ENCODE measurements at regions of chr20 and their contacts with region 1.

Region 1: DNA sequence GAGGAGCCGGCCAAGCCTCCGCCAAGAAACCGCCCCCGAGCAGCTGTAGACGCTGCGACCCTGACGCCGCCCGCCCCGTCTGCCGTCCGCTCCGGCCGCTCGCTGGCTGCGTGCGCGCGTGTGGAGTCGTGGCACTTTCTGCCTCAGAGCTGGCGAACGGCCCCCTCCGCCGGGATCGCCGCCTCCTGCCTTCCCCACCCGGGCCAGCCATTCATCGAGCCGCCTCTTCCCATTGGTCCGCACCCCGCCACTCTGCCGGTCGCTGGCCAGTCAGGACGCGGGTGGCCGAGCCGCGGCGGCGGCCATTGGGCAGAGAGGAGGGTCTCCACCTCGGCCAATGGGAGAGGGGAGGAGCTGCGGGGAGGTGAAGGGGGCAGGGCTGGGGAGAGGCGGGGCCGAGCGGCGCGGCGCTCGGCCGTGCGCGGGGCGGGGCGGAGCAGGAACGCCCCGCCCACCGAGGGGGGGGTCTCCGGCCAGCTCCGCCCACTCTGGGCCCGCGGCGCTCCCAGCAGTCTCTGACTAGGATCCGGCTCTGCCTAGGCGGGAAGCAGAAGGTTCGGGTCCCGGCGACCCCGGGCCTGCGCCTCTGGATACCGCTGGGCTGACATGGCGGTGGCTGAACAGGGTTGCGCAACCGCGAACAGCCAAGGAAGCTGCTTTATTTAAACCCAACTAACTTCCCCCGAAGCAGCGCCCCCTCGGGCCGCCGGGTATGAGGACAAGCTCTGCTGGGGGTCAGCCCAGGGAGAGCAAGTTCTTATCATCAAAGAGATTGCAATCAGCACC is at the start of gene RRBP1:
- DNase-seq: peak; percentile 98
- ATAC-seq: peak; percentile 97
- H3K4me3 Mint-ChIP-seq: peak within 1 kb of the TSS; percentile 77
- H3K27ac Mint-ChIP-seq: peak within 1 kb of the TSS; percentile 88
- H3K4me1 Mint-ChIP-seq: peaks cover 32% of the 10 kb centered on the region
- H3K27me3 Mint-ChIP-seq: peaks cover 29% of the 10 kb centered on the region
- total RNA-seq, gene RRBP1: 64.3 to 66.7 TPM

Region 2: DNA sequence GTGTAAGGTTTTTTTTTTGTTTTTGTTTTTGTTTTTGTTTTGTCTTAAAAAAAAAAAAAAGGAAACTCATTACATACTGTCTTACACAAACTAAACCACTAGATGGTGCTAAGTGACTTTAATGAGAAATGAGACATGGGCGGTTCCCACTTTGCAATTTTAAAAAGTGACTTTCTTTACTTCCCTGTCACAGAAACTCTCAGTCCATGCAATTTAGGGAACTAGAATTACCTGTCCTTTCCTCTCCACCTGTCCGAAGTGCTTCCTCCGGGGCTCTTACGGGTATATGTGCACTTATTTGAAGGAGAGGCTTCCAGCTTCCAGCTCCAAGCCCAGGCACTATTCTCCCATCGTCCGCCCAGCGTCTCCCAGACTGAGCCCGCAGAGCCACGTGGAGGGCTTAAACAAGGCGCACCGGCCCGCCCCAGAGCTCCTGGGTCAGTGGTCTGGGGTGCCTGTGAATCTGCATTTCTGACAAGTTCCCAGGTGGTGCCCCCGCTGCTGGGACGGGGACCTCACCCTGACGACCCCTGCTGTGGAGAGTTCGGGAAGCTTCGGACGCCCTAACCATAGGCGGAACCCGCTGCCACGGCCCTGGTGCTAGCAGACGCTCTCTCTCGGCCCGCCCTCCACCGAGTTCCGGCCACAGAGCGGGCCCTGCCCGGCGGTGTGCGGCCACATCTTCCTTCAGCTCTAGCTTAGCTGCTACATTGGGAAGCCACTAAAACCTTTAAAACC is 177.2 kb before region 1 on chr20:
- CTCF ChIA-PET with region 1: interaction called, 30 read pairs
- POLR2A ChIA-PET with region 1: no interaction called
- DNase-seq: peak; percentile 82
- ATAC-seq: peak; percentile 82
- H3K4me3 Mint-ChIP-seq: peak overlapping the region; percentile 72
- H3K27ac Mint-ChIP-seq: peak overlapping the region; percentile 77
- H3K4me1 Mint-ChIP-seq: peaks cover 52% of the 10 kb centered on the region
- H3K27me3 Mint-ChIP-seq: peaks cover 26% of the 10 kb centered on the region

Region 3: DNA sequence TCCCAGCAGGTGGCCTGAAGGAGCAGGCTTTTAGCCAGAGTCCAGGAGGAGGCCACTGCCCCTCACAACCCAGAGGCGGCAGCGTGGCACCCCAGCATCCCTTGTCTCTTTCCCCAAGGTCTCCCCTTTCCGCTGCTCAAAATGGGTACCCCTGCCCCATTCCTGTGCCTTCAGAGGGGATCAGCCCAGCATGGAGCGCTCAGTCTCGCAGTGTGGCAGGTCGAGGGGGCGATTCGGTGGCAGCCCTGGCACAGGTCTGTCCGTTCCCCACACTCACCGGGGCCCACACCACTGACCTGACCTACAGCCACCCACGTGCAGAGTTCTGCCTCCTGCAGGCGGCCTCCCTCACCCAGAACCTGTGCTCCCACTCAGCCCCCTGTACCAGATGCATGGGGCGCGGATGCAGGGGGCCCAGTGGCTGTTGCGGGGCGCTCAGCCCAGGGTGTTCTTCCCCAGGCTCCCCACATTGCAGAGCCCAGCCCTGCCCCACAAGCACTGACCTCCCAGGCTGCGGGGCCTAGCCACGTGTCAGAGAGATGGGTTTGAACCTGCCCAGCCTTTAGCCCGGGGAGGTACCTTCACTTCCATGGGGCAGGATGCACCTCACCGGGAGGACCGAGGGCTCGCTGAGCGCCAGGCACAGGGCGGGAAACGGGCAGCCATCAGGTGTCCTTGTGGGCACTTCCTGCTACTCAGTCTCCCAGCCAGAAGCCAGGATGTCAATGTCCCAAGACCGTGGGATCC is 70.6 kb before region 1 on chr20:
- CTCF ChIA-PET with region 1: interaction called, 12 read pairs
- POLR2A ChIA-PET with region 1: no interaction called
- DNase-seq: peak; percentile 44
- ATAC-seq: peak; percentile 4
- H3K4me3 Mint-ChIP-seq: peak overlapping the region; percentile 67
- H3K27ac Mint-ChIP-seq: peak overlapping the region; percentile 97
- H3K4me1 Mint-ChIP-seq: peaks cover 47% of the 10 kb centered on the region
- H3K27me3 Mint-ChIP-seq: no peaks in the 10 kb centered on the region

Region 4: GRCh38 chr20:17693444-17694001 is 11.2 kb after region 1 on chr20:
- CTCF ChIA-PET with region 1: interaction called, 29 read pairs
- POLR2A ChIA-PET with region 1: interaction called, 3 read pairs
- DNase-seq: no peak
- ATAC-seq: no peak
- H3K4me3 Mint-ChIP-seq: no peak overlapping the region
- H3K27ac Mint-ChIP-seq: no peak overlapping the region
- H3K4me1 Mint-ChIP-seq: no peaks in the 10 kb centered on the region
- H3K27me3 Mint-ChIP-seq: peaks cover 39% of the 10 kb centered on the region

Region 5: GRCh38 chr20:17735206-17735804 is 53.0 kb after region 1 on chr20:
- CTCF ChIA-PET with region 1: no interaction called
- POLR2A ChIA-PET with region 1: no interaction called
- DNase-seq: no peak
- ATAC-seq: no peak
- H3K4me3 Mint-ChIP-seq: no peak overlapping the region
- H3K27ac Mint-ChIP-seq: no peak overlapping the region
- H3K4me1 Mint-ChIP-seq: no peaks in the 10 kb centered on the region
- H3K27me3 Mint-ChIP-seq: peaks cover 3% of the 10 kb centered on the region

Region 6: GRCh38 chr20:17898548-17898994 is 216.3 kb after region 1 on chr20:
- CTCF ChIA-PET with region 1: interaction called, 64 read pairs
- POLR2A ChIA-PET with region 1: interaction called, 9 read pairs
- DNase-seq: peak; percentile 82
- ATAC-seq: peak; percentile 69
- H3K4me3 Mint-ChIP-seq: no peak overlapping the region
- H3K27ac Mint-ChIP-seq: no peak overlapping the region
- H3K4me1 Mint-ChIP-seq: peaks cover 21% of the 10 kb centered on the region
- H3K27me3 Mint-ChIP-seq: peaks cover 34% of the 10 kb centered on the region

Measured in activated CD8-positive, alpha-beta T cell treated with anti-CD3 and anti-CD28 coated beads, Interleukin-2, amount 10 ng/mL, durations not matched to agents 7 days and 5 days (primary cell).